ENCODE measurements at regions of chr2 and their contacts with region 1.

Region 1: DNA sequence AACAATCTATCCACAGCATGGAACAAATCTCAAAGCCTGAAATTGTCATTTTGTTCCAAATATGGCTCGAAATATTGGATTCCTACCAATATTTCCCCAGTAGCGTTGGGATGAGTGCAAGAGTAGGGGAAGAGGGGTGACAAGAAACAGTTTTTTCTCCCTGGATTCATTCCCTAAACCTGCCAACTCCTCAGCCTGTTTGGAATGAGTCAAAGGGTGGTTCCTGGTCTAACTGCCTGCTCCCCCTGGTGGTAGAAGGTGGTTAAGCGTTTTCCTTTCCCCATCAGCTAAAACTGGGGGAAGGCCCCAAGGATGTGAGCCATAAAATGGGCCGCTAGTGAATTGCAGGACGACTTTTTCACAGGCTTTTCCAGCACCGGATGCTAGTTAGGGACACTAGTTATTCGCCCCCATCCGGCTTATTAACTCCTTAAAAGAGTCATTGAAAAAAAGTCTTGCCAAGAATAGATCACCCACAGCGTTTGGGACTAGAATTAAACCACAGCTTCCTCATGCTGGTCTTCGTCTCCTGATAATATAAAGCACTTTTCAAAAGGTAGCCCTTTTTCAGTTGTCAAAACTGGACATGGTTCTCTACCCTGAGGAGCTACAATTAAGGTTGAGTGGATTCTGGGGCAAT is 72.5 kb downstream of the DHRS9 start:
- DNase-seq: peak; percentile 84
- H3K4me3 Mint-ChIP-seq: no peak overlapping the region
- H3K27ac Mint-ChIP-seq: no peak overlapping the region
- H3K4me1 Mint-ChIP-seq: no peaks in the 10 kb centered on the region
- H3K27me3 Mint-ChIP-seq: no peaks in the 10 kb centered on the region

Region 2: GRCh38 chr2:168961450-168962229 is 180.2 kb before region 1 on chr2:
- CTCF ChIA-PET with region 1: interaction called, 48 read pairs
- intact Hi-C with region 1: loop called (anchors 1 kb)
- DNase-seq: peak; percentile 27
- H3K4me3 Mint-ChIP-seq: no peak overlapping the region
- H3K27ac Mint-ChIP-seq: no peak overlapping the region
- H3K4me1 Mint-ChIP-seq: peaks cover 14% of the 10 kb centered on the region
- H3K27me3 Mint-ChIP-seq: peaks cover 4% of the 10 kb centered on the region

Region 3: DNA sequence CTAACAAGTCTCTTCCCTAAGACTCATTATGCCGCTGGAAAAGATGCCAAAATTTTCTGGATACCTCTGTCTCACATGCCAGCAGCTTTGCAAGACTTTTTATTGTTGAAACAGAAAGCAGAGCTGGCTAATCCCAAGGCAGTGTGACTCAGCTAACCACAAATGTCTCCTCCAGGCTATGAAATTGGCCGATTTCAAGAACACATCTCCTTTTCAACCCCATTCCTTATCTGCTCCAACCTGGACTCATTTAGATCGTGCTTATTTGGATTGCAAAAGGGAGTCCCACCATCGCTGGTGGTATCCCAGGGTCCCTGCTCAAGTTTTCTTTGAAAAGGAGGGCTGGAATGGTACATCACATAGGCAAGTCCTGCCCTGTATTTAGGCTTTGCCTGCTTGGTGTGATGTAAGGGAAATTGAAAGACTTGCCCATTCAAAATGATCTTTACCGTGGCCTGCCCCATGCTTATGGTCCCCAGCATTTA is 46.2 kb before region 1 on chr2:
- CTCF ChIA-PET with region 1: interaction called, 12 read pairs
- intact Hi-C with region 1: no loop called
- DNase-seq: peak; percentile 35
- H3K4me3 Mint-ChIP-seq: no peak overlapping the region
- H3K27ac Mint-ChIP-seq: no peak overlapping the region
- H3K4me1 Mint-ChIP-seq: peaks cover 17% of the 10 kb centered on the region
- H3K27me3 Mint-ChIP-seq: peaks cover 7% of the 10 kb centered on the region

Region 4: DNA sequence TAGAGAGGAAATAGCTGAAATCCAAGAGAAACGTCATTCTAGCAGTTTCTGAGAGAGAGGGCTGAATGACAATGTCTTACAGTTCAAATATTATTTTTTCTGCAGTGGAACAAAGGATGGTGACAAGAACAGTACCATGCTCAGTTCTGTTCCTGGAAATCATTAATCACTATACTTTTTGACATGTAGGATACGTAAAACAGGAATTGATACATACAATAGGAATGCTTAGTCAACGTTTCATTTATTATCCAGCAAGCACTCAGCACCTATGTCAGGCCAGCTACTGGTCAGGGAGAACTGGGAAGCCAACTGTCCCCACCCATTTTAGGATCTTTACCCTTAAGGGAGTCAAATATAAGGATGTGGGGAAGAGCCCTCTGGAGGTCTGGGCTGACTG is 42.2 kb after region 1 on chr2:
- CTCF ChIA-PET with region 1: no interaction called
- intact Hi-C with region 1: no loop called
- DNase-seq: no peak
- H3K4me3 Mint-ChIP-seq: no peak overlapping the region
- H3K27ac Mint-ChIP-seq: no peak overlapping the region
- H3K4me1 Mint-ChIP-seq: no peaks in the 10 kb centered on the region
- H3K27me3 Mint-ChIP-seq: no peaks in the 10 kb centered on the region

Region 5: GRCh38 chr2:169397697-169398096 is 255.9 kb after region 1 on chr2:
- CTCF ChIA-PET with region 1: interaction called, 4 read pairs
- intact Hi-C with region 1: loop called (anchors 5 kb)
- DNase-seq: no peak
- H3K4me3 Mint-ChIP-seq: no peak overlapping the region
- H3K27ac Mint-ChIP-seq: no peak overlapping the region
- H3K4me1 Mint-ChIP-seq: no peaks in the 10 kb centered on the region
- H3K27me3 Mint-ChIP-seq: peaks cover 17% of the 10 kb centered on the region